Activated naive CD4-positive, alpha-beta T cell treated with anti-CD3 and anti-CD28 coated beads, Interleukin-2, amount 10 ng/mL, durations not matched to agents 7 days and 5 days (primary cell): ENCODE measurements at regions of chr18 and their contacts with region 1.

Region 1: DNA sequence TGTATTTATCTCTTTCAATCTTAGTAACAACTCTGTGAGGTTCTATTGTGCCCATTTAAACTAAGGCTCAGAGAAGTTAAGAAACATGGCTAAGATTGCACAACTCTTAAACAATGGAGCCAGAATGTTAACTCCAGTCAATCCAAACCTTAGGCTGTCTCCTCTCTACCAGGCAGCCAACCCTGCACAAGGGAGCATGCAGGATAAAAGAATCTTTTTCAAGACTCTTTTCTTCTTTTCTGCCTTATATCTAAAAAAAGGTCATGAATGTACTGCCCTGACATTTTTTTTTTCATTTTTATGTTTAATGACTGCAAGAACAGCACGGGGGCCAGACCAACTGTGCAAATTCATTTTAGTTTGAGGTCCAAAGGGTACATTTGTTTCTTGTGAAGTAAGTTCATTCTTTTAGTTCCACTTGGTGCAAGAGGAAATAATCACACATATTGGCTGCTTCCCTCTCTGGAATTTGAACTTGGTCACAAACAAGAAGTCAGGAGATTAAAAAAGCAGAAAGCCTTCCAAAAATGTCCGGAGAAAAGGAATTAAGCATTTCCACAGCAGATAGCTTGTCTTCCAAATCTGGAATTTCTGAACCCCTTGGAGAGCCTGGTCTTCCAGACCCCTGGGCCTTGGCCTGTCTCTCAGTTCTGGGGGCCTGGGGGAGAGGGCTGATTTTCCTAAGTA is 96.0 kb upstream of the RIOK3 start:
- DNase-seq: no peak
- H3K4me3 Mint-ChIP-seq: no peak overlapping the region
- H3K27ac Mint-ChIP-seq: no peak overlapping the region
- H3K4me1 Mint-ChIP-seq: peaks cover 22% of the 10 kb centered on the region
- H3K27me3 Mint-ChIP-seq: no peaks in the 10 kb centered on the region

Region 2: DNA sequence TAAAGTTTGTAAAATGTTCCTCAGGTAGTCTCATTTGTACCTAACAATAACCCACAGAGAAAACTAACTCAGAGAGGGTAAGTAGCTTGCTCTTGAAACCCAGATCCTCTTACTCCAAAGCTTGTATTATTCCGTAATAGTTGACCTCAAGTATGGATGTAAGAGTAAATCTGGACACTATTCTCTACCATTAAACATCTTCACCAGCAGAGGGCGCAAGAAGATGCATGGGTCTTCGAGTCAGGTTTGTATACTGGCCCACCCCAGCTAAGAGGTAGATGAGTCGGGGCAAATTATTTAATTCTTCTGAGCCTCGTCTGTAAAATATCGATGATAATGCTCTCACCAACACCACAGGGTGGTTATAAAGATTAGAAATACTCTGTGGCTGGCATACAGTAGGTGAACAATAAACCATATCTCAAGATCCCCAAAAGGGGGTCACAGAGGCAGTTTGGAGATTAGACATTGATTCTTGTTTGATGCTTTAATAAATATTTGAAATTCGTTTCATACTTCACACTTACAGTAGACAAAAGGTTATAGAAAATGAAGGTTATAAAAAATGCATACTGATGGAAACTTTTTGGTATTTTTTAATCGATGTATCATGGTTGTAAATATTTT is 225.3 kb before region 1 on chr18:
- CTCF ChIA-PET with region 1: interaction called, 87 read pairs
- DNase-seq: peak; percentile 70
- H3K4me3 Mint-ChIP-seq: no peak overlapping the region
- H3K27ac Mint-ChIP-seq: peak overlapping the region; percentile 14
- H3K4me1 Mint-ChIP-seq: peaks cover 28% of the 10 kb centered on the region
- H3K27me3 Mint-ChIP-seq: peaks cover 40% of the 10 kb centered on the region

Region 3: GRCh38 chr18:23228102-23229061 is 128.7 kb before region 1 on chr18:
- CTCF ChIA-PET with region 1: interaction called, 14 read pairs
- DNase-seq: peak; percentile 48
- H3K4me3 Mint-ChIP-seq: no peak overlapping the region
- H3K27ac Mint-ChIP-seq: peak overlapping the region; percentile 88
- H3K4me1 Mint-ChIP-seq: peaks cover 67% of the 10 kb centered on the region
- H3K27me3 Mint-ChIP-seq: peaks cover 4% of the 10 kb centered on the region

Region 4: GRCh38 chr18:23337599-23338444 is 19.2 kb before region 1 on chr18:
- CTCF ChIA-PET with region 1: no interaction called
- DNase-seq: no peak
- H3K4me3 Mint-ChIP-seq: no peak overlapping the region
- H3K27ac Mint-ChIP-seq: no peak overlapping the region
- H3K4me1 Mint-ChIP-seq: no peaks in the 10 kb centered on the region
- H3K27me3 Mint-ChIP-seq: no peaks in the 10 kb centered on the region

Region 5: DNA sequence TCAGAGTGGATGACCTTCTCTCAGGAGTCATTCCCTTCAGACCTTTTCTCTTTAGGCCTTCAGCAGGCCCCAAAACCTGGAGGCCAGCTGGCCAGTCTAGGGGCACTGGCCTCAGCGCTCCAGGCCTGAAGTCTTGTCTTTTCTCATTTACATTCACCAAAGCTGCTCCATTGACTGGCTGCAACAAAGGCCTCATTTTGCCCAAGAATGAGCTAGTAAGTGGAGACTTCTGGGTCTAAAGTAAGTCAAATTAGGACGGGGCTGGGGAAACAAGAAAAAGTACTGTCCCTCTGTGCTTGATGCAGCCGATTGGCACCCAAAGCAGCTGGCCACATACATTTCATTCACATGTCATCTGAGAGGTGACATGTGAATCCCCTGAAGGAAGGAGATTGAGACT is 12.2 kb after region 1 on chr18:
- CTCF ChIA-PET with region 1: interaction called, 11 read pairs
- DNase-seq: no peak
- H3K4me3 Mint-ChIP-seq: no peak overlapping the region
- H3K27ac Mint-ChIP-seq: no peak overlapping the region
- H3K4me1 Mint-ChIP-seq: no peaks in the 10 kb centered on the region
- H3K27me3 Mint-ChIP-seq: no peaks in the 10 kb centered on the region

Region 6: DNA sequence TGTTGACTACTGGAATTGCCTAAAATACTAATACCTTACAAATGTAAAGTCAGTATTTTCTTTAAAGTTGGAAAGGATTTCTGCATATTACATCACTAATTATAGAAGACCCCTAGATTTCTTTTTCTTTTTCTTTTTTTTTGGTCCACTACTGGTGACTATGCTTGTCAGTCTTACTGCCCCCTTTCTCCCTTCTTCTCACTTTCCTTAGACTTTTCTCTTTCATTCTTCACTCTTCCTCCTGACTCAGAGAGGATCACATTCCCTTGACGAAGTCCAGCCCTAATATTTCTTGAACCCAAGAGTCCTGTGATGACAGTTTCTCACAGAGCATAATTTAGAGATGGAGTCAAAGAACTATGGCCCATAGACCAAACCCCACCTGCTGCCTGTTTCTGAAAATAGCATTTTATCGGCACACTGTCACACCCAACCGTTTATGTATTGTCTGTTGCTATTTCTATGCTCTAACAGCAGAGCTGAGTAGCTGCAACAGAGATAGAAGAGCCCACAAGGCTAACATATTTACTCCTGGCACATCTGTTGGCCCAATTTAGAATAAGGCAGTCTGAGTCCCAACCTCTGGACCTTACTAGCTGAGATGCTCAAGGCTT is 55.4 kb after region 1 on chr18:
- CTCF ChIA-PET with region 1: interaction called, 14 read pairs
- DNase-seq: no peak
- H3K4me3 Mint-ChIP-seq: no peak overlapping the region
- H3K27ac Mint-ChIP-seq: no peak overlapping the region
- H3K4me1 Mint-ChIP-seq: no peaks in the 10 kb centered on the region
- H3K27me3 Mint-ChIP-seq: no peaks in the 10 kb centered on the region